HAP-1 (cell line): ENCODE measurements at regions of chr5 and their contacts with region 1.

Region 1: GRCh38 chr5:81165493-81166119 is 67.5 kb upstream of the CKMT2 start:
- DNase-seq: peak; percentile 69 to 87
- H3K4me3 ChIP-seq: no peak overlapping the region
- H3K4me1 ChIP-seq: no peaks in the 10 kb centered on the region
- H3K27me3 ChIP-seq: no peaks in the 10 kb centered on the region

Region 2: DNA sequence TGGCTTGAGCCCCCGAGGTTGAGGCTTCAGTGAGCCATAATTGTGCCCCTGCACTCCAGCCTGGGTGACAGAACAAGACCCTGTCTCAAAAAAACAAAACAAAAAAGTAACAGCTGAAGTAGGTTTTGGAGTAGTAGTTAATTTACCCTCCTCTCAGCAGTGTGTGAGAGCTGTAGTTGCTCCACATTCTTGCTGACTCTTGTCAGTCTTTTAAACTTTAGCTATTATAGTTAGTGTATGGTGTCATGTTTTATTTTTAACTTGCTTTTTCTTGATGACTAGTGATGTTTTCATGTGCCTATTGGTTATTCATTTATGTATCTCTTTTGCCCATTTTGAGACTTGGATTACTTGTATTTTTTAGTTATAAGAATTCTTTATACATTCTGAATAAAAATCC is 458.0 kb before region 1 on chr5:
- in situ Hi-C with region 1: loop called (anchors 10 kb)
- DNase-seq: no peak
- H3K4me3 ChIP-seq: no peak overlapping the region
- H3K4me1 ChIP-seq: no peaks in the 10 kb centered on the region
- H3K27me3 ChIP-seq: no peaks in the 10 kb centered on the region

Region 3: GRCh38 chr5:81292130-81292529 is 126.5 kb after region 1 on chr5:
- in situ Hi-C with region 1: no loop called
- DNase-seq: no peak
- H3K4me3 ChIP-seq: no peak overlapping the region
- H3K4me1 ChIP-seq: no peaks in the 10 kb centered on the region
- H3K27me3 ChIP-seq: no peaks in the 10 kb centered on the region

Region 4: GRCh38 chr5:81687292-81687691 is 521.7 kb after region 1 on chr5:
- in situ Hi-C with region 1: no loop called
- DNase-seq: no peak
- H3K4me3 ChIP-seq: no peak overlapping the region
- H3K4me1 ChIP-seq: no peaks in the 10 kb centered on the region
- H3K27me3 ChIP-seq: no peaks in the 10 kb centered on the region